AG04449 (cell line): ENCODE measurements at regions of chr17 and their contacts with region 1.

Region 1: DNA sequence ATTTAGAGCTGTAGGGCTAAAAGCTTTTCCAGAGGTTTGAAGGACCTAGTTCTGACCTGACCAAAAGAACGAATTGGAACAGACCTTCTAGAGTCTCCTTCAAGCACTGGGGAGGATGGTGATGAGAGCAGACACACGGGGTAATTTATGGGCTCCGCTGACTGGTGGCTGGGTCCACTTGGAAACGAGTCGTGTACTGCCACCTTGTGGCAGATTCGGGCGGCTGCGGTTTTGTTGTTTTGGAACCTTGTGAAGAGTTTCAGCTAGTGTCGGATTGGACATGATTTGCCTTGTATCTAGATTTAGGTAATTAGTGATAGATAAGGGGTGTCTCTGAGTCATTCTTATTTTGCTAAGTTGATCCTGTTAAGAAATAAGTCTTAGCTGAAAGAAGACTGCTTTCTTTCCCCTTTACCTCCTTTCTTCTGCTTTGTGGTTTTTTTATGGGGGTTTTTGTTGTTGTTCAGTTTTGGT is 98.9 kb downstream of the AATF start:
- DNase-seq: peak; percentile 36
- H3K4me3 ChIP-seq: no peak overlapping the region
- CTCF ChIP-seq: peak; percentile 76

Region 2: GRCh38 chr17:36614933-36615332 is 432.7 kb before region 1 on chr17:
- CTCF ChIA-PET with region 1: interaction called, 14 read pairs
- POLR2A ChIA-PET with region 1: no interaction called
- DNase-seq: no peak
- H3K4me3 ChIP-seq: no peak overlapping the region
- CTCF ChIP-seq: no peak

Region 3: DNA sequence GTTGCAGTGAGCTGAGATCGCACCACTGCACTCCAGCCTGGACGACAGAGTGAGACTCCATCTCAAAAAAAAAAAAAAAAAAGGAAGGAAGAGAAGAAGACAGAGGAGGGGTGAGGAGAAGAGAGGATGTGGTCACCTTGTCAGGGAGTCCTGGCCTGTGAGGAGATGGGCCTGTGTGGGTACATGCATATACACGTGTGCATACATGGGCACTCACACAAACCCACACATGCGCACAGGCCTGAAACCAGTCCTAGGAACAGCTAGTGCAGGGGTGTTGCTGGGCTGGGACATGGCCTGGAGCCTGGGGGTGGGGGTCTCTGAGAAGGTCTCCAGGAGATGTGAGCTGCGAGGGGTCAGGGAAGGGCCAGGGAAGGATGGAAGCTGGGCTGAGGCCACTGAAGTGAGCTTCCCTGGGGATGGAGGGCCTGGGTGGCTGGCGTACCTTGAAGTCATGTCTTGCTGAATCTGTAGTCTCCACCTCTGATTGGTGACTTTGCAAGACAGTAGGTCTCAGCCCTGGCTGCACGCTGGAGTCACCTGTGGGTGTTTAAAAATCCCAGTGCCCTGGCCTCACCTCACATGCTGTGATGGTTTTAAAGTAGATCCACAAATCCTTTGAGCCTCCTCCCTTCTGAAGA is 373.9 kb before region 1 on chr17:
- CTCF ChIA-PET with region 1: no interaction called
- POLR2A ChIA-PET with region 1: no interaction called
- DNase-seq: no peak
- H3K4me3 ChIP-seq: no peak overlapping the region
- CTCF ChIP-seq: no peak

Region 4: GRCh38 chr17:36999471-36999870 is 48.2 kb before region 1 on chr17:
- CTCF ChIA-PET with region 1: interaction called, 10 read pairs
- POLR2A ChIA-PET with region 1: no interaction called
- DNase-seq: no peak
- H3K4me3 ChIP-seq: no peak overlapping the region
- CTCF ChIP-seq: no peak

Region 5: DNA sequence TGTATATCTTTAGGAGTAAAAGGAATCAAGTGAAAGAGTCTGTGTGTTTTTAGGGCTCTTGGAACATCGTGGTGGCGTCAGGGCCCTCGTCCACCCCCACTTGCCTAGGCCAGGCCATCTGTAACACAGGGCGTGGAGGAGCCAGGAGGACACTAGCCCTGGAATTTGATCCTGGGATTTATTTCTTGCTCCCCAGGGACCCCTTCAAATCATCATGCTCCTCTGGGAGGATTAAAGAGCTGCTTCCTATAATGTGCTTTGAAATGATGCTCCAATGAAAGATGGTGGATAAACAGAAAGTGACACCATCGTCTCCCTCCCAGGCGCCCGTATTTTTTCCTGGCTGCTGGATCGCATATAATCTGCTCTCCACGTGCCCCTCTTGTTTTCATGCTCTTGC is 14.4 kb after region 1 on chr17:
- CTCF ChIA-PET with region 1: interaction called, 46 read pairs
- POLR2A ChIA-PET with region 1: no interaction called
- DNase-seq: no peak
- H3K4me3 ChIP-seq: no peak overlapping the region
- CTCF ChIP-seq: no peak

Region 6: DNA sequence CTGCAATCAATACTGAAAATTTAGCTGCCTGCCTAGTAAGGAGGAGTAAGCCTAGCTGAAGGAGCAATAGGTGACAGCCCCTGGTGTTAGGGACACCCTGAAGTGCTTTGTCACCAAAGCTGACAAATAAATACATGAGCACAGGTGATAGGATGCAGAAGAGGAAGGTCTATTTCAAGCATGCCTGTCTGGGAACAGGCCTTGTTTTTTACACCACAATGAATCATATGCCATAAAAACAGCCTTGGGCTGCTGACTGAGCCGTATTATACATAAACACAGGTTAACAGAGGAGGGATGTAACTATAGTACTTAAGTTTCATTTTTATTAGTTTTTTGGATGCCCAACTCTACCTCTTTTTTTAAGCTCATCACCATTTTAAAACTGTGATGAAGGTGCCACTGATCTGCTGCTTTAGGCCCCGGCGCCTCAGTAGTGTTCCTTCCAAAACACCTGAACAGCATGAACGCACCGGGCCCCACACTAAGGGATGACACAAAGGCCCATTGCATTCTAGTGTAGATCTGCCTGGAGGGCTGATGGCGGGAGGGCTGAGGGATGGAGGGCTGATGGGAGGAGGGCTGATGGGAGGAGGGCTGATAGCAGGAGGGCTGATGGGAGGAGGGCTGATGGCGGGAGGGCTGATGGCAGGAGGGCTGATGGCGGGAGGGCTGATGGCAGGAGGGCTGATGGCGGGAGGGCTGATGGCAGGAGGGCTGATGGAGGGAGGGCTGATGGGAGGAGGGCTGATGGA is 51.4 kb after region 1 on chr17:
- CTCF ChIA-PET with region 1: interaction called, 10 read pairs
- POLR2A ChIA-PET with region 1: no interaction called
- DNase-seq: no peak
- H3K4me3 ChIP-seq: no peak overlapping the region
- CTCF ChIP-seq: no peak